Heart right ventricle (tissue), 16 donors: ENCODE measurements at regions of chr6 and their contacts with region 1.

Region 1: GRCh38 chr6:105484238-105485161 is 81.6 kb upstream of the PREP start:
- DNase-seq: no peak
- ATAC-seq: peak in 4 of 8 donors; percentile 45 to 60 (median 49)
- H3K4me3 ChIP-seq: peak overlapping the region in 2 of 10 donors; percentile 22 to 27
- H3K27ac ChIP-seq: peak overlapping the region in 1 of 10 donors; percentile 23
- H3K4me1 ChIP-seq: peaks cover 0 to 52% (median 24%) of the 10 kb centered on the region in 9 donors
- H3K27me3 ChIP-seq: no peaks in the 10 kb centered on the region
- CTCF ChIP-seq: peak; percentile 83 to 97 (median 93)

Region 2: GRCh38 chr6:105545947-105546731 is 61.6 kb after region 1 on chr6:
- intact Hi-C with region 1: no loop called
- DNase-seq: no peak
- ATAC-seq: peak in 1 of 8 donors; percentile 30
- H3K4me3 ChIP-seq: no peak overlapping the region
- H3K27ac ChIP-seq: no peak overlapping the region
- H3K4me1 ChIP-seq: no peaks in the 10 kb centered on the region
- H3K27me3 ChIP-seq: peaks cover 0 to 2% (median 0%) of the 10 kb centered on the region in 7 donors
- CTCF ChIP-seq: no peak

Region 3: GRCh38 chr6:105578179-105578707 is 93.7 kb after region 1 on chr6:
- intact Hi-C with region 1: no loop called
- DNase-seq: no peak
- ATAC-seq: no peak
- H3K4me3 ChIP-seq: no peak overlapping the region
- H3K27ac ChIP-seq: no peak overlapping the region
- H3K4me1 ChIP-seq: no peaks in the 10 kb centered on the region
- H3K27me3 ChIP-seq: no peaks in the 10 kb centered on the region
- CTCF ChIP-seq: no peak

Region 4: GRCh38 chr6:105596284-105596755 is 111.8 kb after region 1 on chr6:
- intact Hi-C with region 1: loop called in 1 of 10 experiments (anchors 5 kb)
- DNase-seq: no peak
- ATAC-seq: peak in 1 of 8 donors; percentile 53
- H3K4me3 ChIP-seq: no peak overlapping the region
- H3K27ac ChIP-seq: no peak overlapping the region
- H3K4me1 ChIP-seq: peaks cover 4 to 57% (median 20%) of the 10 kb centered on the region in 9 donors
- H3K27me3 ChIP-seq: no peaks in the 10 kb centered on the region
- CTCF ChIP-seq: no peak

Region 5: DNA sequence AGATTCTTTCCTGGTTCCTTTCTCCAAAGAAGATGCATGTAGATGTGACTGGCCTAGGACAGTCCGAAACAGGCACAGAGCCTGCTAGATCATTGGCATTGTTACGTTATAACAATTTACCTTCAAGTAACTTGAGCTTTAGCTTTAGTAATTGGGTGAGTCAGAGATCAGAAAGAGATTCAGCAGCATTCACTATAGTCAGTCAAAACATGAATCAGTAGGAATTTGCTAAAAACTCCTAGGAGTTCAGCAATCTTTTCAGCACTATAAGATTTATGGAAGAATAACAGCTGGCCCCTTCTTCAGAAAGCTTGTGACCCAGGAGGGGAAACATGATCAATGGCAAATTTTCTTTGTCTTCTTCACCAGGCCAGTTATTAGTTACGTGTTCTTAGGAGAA is 319.9 kb after region 1 on chr6:
- intact Hi-C with region 1: loop called in 1 of 10 experiments (anchors 10 kb)
- DNase-seq: no peak
- ATAC-seq: no peak
- H3K4me3 ChIP-seq: no peak overlapping the region
- H3K27ac ChIP-seq: no peak overlapping the region
- H3K4me1 ChIP-seq: peaks cover 0 to 11% (median 3%) of the 10 kb centered on the region in 9 donors
- H3K27me3 ChIP-seq: no peaks in the 10 kb centered on the region
- CTCF ChIP-seq: no peak

Region 6: DNA sequence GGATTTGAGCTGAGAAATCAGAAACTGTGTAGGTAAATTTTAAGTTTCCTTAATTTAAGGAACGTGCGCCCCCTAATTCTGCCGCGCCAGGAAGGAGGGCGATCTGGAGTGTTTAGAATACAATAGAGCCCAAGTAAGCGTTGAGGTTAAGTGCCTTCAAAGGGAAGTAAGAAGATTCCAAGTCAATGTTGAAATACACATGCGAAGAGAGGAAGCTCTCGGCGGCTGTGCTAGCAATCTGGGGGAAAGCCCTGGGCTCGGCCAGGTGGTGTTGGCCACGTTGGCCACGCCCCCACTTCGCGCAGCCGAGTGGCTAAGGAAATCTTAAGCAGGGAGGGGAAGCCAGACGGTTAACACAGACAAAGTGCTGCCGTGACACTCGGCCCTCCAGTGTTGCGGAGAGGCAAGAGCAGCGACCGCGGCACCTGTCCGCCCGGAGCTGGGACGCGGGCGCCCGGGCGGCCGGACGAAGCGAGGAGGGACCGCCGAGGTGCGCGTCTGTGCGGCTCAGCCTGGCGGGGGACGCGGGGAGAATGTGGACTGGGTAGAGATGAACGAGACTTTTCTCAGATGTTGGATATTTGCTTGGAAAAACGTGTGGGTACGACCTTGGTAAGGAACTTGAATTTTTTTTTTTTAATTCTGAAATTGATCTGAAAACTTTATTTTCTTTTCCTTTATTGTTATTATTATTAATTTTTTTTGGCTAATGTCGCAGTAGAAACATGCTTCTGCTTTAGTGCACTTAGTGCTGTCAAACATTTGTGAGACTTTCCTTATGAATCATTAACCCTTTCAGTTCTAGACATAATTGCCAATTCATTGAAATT is 601.7 kb after region 1 on chr6 and contains the start of gene PRDM1:
- intact Hi-C with region 1: loop called in 6 of 10 experiments (anchors 5 to 10 kb)
- DNase-seq: peak; percentile 72
- ATAC-seq: peak; percentile 51 to 80 (median 73)
- H3K4me3 ChIP-seq: peak within 1 kb of the TSS; percentile 39 to 69 (median 56)
- H3K27ac ChIP-seq: peak within 1 kb of the TSS; percentile 33 to 91 (median 68)
- H3K4me1 ChIP-seq: peaks cover 0 to 78% (median 20%) of the 10 kb centered on the region in 9 donors
- H3K27me3 ChIP-seq: peaks cover 0 to 64% (median 37%) of the 10 kb centered on the region in 7 donors
- CTCF ChIP-seq: peak in 2 of 9 donors; percentile 26 to 29
- total RNA-seq, gene PRDM1: 0.47 to 11.2 (median 2.1) TPM

Region 7: GRCh38 chr6:106223300-106223930 is 738.9 kb after region 1 on chr6:
- intact Hi-C with region 1: loop called (anchors 2 to 10 kb)
- DNase-seq: peak in 1 of 2 donors; percentile 66
- ATAC-seq: peak in 5 of 8 donors; percentile 62 to 75 (median 63)
- H3K4me3 ChIP-seq: no peak overlapping the region
- H3K27ac ChIP-seq: no peak overlapping the region
- H3K4me1 ChIP-seq: peaks cover 0 to 10% (median 0%) of the 10 kb centered on the region in 9 donors
- H3K27me3 ChIP-seq: no peaks in the 10 kb centered on the region
- CTCF ChIP-seq: peak; percentile 40 to 76 (median 66)

Region 8: DNA sequence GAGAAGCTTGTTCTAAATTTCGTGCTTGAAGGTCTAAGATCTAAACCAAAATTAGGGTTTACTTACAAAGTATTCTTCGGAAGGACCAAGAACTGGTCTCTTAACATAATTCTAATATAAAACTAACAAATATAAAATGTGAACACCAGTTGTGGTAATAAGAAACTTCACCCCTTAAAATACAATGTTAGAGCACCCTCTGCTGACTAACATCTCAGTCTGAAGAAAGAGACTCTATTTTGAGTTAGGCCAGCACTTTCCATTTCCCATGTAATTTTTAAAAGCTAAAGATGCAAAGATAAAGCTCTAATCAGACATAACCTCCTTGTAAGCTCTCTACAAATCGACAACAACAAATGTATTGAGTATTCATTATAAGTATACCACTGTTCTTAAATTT is 816.4 kb after region 1 on chr6:
- intact Hi-C with region 1: loop called in 6 of 10 experiments (anchors 5 to 10 kb)
- DNase-seq: no peak
- ATAC-seq: peak in 1 of 8 donors; percentile 38
- H3K4me3 ChIP-seq: no peak overlapping the region
- H3K27ac ChIP-seq: no peak overlapping the region
- H3K4me1 ChIP-seq: peaks cover 0 to 5% (median 0%) of the 10 kb centered on the region in 9 donors
- H3K27me3 ChIP-seq: no peaks in the 10 kb centered on the region
- CTCF ChIP-seq: peak; percentile 15 to 68 (median 57)